PC-9 (cell line): ENCODE measurements at regions of chr6 and their contacts with region 1.

Region 1: GRCh38 chr6:7154341-7155139 is 46.8 kb downstream of the RREB1 start:
- DNase-seq: no peak
- H3K4me3 ChIP-seq: no peak overlapping the region
- H3K27ac ChIP-seq: no peak overlapping the region
- H3K4me1 ChIP-seq: peaks cover 36% of the 10 kb centered on the region
- H3K27me3 ChIP-seq: no peaks in the 10 kb centered on the region
- CTCF ChIP-seq: no peak

Region 2: DNA sequence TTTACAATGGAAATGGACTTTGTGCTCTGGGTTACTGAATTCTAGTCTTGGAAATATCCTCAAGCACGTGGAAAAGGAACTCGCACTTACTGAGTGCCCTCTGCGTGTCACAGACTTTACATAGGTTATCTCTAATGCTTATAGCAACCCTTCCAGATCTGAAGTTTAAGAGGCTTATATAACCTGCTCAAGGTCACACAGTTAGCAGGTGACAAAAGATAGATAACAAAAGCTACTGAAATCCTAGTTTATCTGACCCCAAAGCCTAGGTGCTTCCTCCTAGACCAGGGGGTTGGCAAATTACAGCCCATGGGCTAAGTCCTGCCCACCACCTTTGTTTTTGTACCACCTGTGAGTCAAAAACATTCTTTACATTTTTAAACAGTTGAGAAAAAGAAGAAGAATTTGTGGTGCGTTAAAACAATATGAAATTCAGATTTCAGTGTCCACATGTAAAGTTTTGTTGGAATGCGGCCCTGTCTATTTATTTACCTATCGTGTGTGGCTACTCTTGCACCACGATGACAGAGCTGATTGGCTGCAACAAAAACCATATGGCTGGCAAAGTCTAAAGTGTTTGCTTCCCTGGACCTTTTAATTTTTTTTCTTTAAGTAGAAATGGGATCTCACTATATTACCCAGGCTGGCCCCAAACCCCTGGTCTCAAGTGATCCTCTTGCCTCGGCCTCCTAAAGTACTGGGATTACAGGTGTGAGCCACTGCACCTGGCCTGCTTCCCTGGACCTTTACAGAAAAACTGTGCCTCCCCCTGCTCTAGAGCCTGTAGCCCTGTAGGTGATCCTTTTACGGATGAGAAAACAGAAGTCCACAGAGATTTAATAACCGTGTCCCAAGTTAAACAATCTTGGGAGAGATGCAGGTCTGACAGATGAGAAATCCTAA is 157.0 kb before region 1 on chr6:
- CTCF ChIA-PET with region 1: no interaction called
- POLR2A ChIA-PET with region 1: interaction called, 12 read pairs
- intact Hi-C with region 1: no loop called
- DNase-seq: peak; percentile 25 to 65
- H3K4me3 ChIP-seq: no peak overlapping the region
- H3K27ac ChIP-seq: no peak overlapping the region
- H3K4me1 ChIP-seq: peaks cover 26% of the 10 kb centered on the region
- H3K27me3 ChIP-seq: no peaks in the 10 kb centered on the region
- CTCF ChIP-seq: no peak

Region 3: GRCh38 chr6:7424967-7425807 is 270.6 kb after region 1 on chr6:
- CTCF ChIA-PET with region 1: no interaction called
- POLR2A ChIA-PET with region 1: no interaction called
- intact Hi-C with region 1: no loop called
- DNase-seq: peak; percentile 32 to 57
- H3K4me3 ChIP-seq: no peak overlapping the region
- H3K27ac ChIP-seq: no peak overlapping the region
- H3K4me1 ChIP-seq: no peaks in the 10 kb centered on the region
- H3K27me3 ChIP-seq: no peaks in the 10 kb centered on the region
- CTCF ChIP-seq: peak; percentile 61